Lower leg skin (tissue), 4 donors: ENCODE measurements at regions of chrX and their contacts with region 1.

Region 1: GRCh38 chrX:153582896-153583295 is 16.0 kb downstream of the CCNQ start:
- DNase-seq: no peak
- H3K4me3 ChIP-seq: no peak overlapping the region
- CTCF ChIP-seq: no peak
- POLR2A ChIP-seq: no peak

Region 2: DNA sequence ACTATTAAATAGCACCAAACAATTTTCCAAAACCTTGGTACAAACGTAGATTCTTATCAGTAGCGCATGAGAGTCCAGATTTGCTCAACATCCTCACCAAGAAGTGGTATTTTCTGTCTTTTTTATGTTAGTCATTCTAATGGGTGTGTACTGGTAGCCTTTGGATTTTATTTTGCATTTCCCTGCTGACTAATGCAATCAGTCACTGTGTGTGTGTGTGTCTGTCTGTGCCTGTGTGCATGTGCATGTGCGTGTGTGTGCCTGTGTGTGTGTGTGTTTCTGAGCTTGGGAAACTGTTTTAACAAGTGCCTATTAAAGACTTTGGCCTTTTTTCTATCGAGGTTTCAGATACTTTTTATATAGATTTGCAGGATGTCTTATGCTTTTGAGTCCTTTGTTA is 1362.3 kb before region 1 on chrX:
- intact Hi-C with region 1: no loop called
- DNase-seq: no peak
- H3K4me3 ChIP-seq: no peak overlapping the region
- CTCF ChIP-seq: no peak
- POLR2A ChIP-seq: no peak

Region 3: DNA sequence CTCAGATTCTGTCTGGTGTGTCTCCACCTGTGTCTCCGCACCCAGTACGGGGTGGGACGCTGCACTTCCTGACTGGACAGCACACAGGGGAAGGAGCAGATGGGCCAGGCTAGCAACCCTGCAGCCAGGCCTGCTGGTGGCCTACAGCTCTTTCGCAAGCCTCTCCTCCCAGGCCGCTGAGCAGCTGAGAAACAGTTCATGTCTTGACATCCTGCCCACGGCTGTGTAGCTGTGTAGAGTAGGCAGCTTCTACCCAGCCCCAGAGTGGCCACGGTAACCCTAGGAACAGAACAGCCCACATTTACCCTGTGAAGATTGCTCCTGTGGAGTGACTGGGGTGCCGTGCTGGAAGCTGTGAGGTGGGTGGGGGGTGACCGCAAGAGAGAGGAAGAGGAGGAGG is 22.9 kb before region 1 on chrX:
- intact Hi-C with region 1: loop called (anchors 1 kb)
- DNase-seq: no peak
- H3K4me3 ChIP-seq: no peak overlapping the region
- CTCF ChIP-seq: no peak
- POLR2A ChIP-seq: no peak

Region 4: GRCh38 chrX:153981771-153982533 is 399.1 kb after region 1 on chrX:
- intact Hi-C with region 1: no loop called
- DNase-seq: peak; percentile 54 to 87
- H3K4me3 ChIP-seq: no peak overlapping the region
- CTCF ChIP-seq: no peak
- POLR2A ChIP-seq: no peak